Activated CD4-positive, alpha-beta memory T cell treated with anti-CD3 and anti-CD28 coated beads for 36 hours (primary cell): ENCODE measurements at regions of chr20 and their contacts with region 1.

Region 1: GRCh38 chr20:48620519-48621254 is 207.1 kb downstream of the PREX1 start:
- DNase-seq: peak; percentile 83
- H3K4me3 Mint-ChIP-seq: peak overlapping the region; percentile 20
- H3K27ac Mint-ChIP-seq: no peak overlapping the region
- H3K4me1 Mint-ChIP-seq: peaks cover 12% of the 10 kb centered on the region
- H3K27me3 Mint-ChIP-seq: no peaks in the 10 kb centered on the region

Region 2: GRCh38 chr20:47663333-47664067 is 957.2 kb before region 1 on chr20:
- CTCF ChIA-PET with region 1: interaction called, 7 read pairs
- POLR2A ChIA-PET with region 1: no interaction called
- intact Hi-C with region 1: loop called (anchors 5 kb)
- DNase-seq: peak; percentile 85
- H3K4me3 Mint-ChIP-seq: no peak overlapping the region
- H3K27ac Mint-ChIP-seq: no peak overlapping the region
- H3K4me1 Mint-ChIP-seq: peaks cover 2% of the 10 kb centered on the region
- H3K27me3 Mint-ChIP-seq: no peaks in the 10 kb centered on the region

Region 3: GRCh38 chr20:47725248-47725973 is 895.3 kb before region 1 on chr20:
- CTCF ChIA-PET with region 1: interaction called, 19 read pairs
- POLR2A ChIA-PET with region 1: no interaction called
- intact Hi-C with region 1: loop called (anchors 1 kb)
- DNase-seq: peak; percentile 90
- H3K4me3 Mint-ChIP-seq: no peak overlapping the region
- H3K27ac Mint-ChIP-seq: no peak overlapping the region
- H3K4me1 Mint-ChIP-seq: peaks cover 22% of the 10 kb centered on the region
- H3K27me3 Mint-ChIP-seq: no peaks in the 10 kb centered on the region

Region 4: GRCh38 chr20:48597405-48598302 is 23.0 kb before region 1 on chr20:
- CTCF ChIA-PET with region 1: interaction called, 14 read pairs
- POLR2A ChIA-PET with region 1: no interaction called
- intact Hi-C with region 1: no loop called
- DNase-seq: no peak
- H3K4me3 Mint-ChIP-seq: no peak overlapping the region
- H3K27ac Mint-ChIP-seq: no peak overlapping the region
- H3K4me1 Mint-ChIP-seq: no peaks in the 10 kb centered on the region
- H3K27me3 Mint-ChIP-seq: peaks cover 8% of the 10 kb centered on the region

Region 5: GRCh38 chr20:48635433-48636310 is 15.0 kb after region 1 on chr20:
- CTCF ChIA-PET with region 1: interaction called, 21 read pairs
- POLR2A ChIA-PET with region 1: no interaction called
- intact Hi-C with region 1: no loop called
- DNase-seq: peak; percentile 83
- H3K4me3 Mint-ChIP-seq: no peak overlapping the region
- H3K27ac Mint-ChIP-seq: peak overlapping the region; percentile 74
- H3K4me1 Mint-ChIP-seq: peaks cover 5% of the 10 kb centered on the region
- H3K27me3 Mint-ChIP-seq: no peaks in the 10 kb centered on the region

Region 6: GRCh38 chr20:48697879-48698724 is 77.4 kb after region 1 on chr20:
- CTCF ChIA-PET with region 1: no interaction called
- POLR2A ChIA-PET with region 1: no interaction called
- intact Hi-C with region 1: no loop called
- DNase-seq: peak; percentile 54
- H3K4me3 Mint-ChIP-seq: no peak overlapping the region
- H3K27ac Mint-ChIP-seq: peak overlapping the region; percentile 53
- H3K4me1 Mint-ChIP-seq: peaks cover 26% of the 10 kb centered on the region
- H3K27me3 Mint-ChIP-seq: no peaks in the 10 kb centered on the region

Region 7: DNA sequence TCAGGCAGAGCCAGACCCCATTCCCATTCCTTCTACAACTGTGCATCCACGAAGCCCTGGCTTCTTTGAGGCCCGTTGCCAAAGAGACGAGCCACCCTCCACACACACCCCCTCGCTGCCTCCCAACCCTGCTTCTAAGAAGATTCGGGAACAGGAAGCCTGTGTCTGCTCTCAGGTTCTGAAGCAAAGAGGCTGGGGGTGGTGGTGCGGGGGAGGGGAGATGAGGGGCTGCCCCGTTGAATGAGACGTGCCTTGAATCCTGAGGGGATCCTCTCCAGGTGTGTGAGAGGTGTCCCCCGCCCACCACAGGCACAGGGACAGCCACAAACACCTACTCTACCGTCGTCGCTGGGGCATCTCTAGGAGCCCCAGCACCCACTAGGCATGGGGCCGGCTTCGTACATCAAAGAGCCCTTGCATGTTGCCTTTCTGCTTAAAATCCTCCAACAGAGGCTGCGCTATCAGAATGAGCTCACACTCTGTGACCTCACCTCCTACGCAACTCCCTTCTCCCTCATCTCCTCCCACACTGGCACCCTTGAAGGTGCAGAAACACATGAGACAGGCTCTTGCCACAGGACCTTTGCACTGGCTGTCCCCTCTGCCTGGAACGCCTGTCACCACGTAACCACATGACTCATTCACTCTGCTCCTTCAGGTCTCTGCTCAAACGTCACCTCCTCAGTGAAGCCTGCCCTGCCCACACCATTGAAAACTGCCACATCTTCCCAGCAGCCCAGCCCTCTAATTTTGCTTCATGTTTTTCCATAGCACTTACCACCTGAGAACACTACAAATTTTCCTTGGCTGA is 148.6 kb after region 1 on chr20:
- CTCF ChIA-PET with region 1: no interaction called
- POLR2A ChIA-PET with region 1: no interaction called
- intact Hi-C with region 1: no loop called
- DNase-seq: peak; percentile 98
- H3K4me3 Mint-ChIP-seq: peak overlapping the region; percentile 59
- H3K27ac Mint-ChIP-seq: peak overlapping the region; percentile 91
- H3K4me1 Mint-ChIP-seq: peaks cover 93% of the 10 kb centered on the region
- H3K27me3 Mint-ChIP-seq: no peaks in the 10 kb centered on the region